CD4-positive, alpha-beta T cell (primary cell): ENCODE measurements at regions of chr14 and their contacts with region 1.

Region 1: DNA sequence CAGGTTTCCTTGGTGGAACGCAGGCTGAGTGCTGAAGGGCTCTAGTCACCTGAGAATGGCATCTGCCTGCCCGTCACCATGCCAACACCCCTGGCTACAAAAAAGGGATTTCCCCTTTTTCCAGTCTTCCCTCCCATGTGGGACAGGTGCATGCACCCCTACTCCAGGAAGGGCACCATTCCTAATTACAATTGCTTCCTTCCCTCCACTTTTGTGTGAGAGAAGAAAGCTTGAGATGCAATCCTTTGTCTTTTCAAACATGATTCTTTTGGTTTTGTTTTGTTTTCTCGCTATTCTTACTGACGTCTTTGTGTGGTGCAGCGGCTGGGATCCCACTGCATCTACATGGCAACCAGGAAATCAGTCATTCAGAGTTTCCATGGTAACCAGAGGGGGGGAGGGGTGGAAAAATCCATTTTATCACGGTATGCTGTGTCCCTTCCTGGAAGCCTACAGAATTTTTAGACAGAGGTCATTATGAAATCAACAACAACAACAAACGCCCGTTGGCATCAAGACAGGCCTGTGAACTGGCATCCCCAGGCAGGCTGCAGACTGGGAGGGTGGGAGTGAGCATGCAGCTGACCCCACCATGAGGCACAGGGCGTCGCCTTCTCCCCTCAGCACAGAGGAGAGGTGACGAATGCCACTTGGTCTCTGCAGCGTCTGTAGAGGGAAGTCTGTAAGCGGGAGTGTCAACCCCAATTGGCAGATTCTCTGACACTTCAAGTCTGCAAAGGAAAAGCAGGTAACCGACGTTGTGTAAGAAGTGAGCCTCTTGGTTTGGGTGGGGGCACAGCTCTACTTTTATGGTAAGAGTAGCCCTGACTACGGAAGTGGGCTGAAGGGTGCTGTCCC is 13.6 kb upstream of the GNG2 start:
- DNase-seq: peak; percentile 66 to 98 (median 82)
- ATAC-seq: peak; percentile 83
- H3K4me3 ChIP-seq: peak overlapping the region; percentile 53
- H3K4me3 Mint-ChIP-seq: peak overlapping the region; percentile 86
- H3K27ac ChIP-seq: peak overlapping the region; percentile 99 to 100
- H3K27ac Mint-ChIP-seq: peak overlapping the region; percentile 98
- H3K4me1 ChIP-seq: peaks cover 44% of the 10 kb centered on the region
- H3K4me1 Mint-ChIP-seq: peaks cover 72% of the 10 kb centered on the region
- H3K27me3 ChIP-seq: no peaks in the 10 kb centered on the region
- H3K27me3 Mint-ChIP-seq: no peaks in the 10 kb centered on the region
- CTCF ChIP-seq: no peak

Region 2: GRCh38 chr14:51630801-51631386 is 216.0 kb before region 1 on chr14:
- CTCF ChIA-PET with region 1: no interaction called
- POLR2A ChIA-PET with region 1: no interaction called
- intact Hi-C with region 1: no loop called
- DNase-seq: no peak
- ATAC-seq: no peak
- H3K4me3 ChIP-seq: no peak overlapping the region
- H3K4me3 Mint-ChIP-seq: no peak overlapping the region
- H3K27ac ChIP-seq: no peak overlapping the region
- H3K27ac Mint-ChIP-seq: no peak overlapping the region
- H3K4me1 ChIP-seq: no peaks in the 10 kb centered on the region
- H3K4me1 Mint-ChIP-seq: no peaks in the 10 kb centered on the region
- H3K27me3 ChIP-seq: peaks cover 3 to 16% of the 10 kb centered on the region in 2 experiments
- H3K27me3 Mint-ChIP-seq: peaks cover 27% of the 10 kb centered on the region
- CTCF ChIP-seq: no peak

Region 3: GRCh38 chr14:51828017-51828797 is 18.7 kb before region 1 on chr14:
- CTCF ChIA-PET with region 1: interaction called, 14 read pairs
- POLR2A ChIA-PET with region 1: interaction called, 16 read pairs
- intact Hi-C with region 1: loop called in 1 of 2 experiments (anchors 1 kb)
- DNase-seq: peak; percentile 15 to 82 (median 54)
- ATAC-seq: peak; percentile 96
- H3K4me3 ChIP-seq: no peak overlapping the region
- H3K4me3 Mint-ChIP-seq: no peak overlapping the region
- H3K27ac ChIP-seq: no peak overlapping the region
- H3K27ac Mint-ChIP-seq: no peak overlapping the region
- H3K4me1 ChIP-seq: peaks cover 21% of the 10 kb centered on the region
- H3K4me1 Mint-ChIP-seq: no peaks in the 10 kb centered on the region
- H3K27me3 ChIP-seq: no peaks in the 10 kb centered on the region
- H3K27me3 Mint-ChIP-seq: no peaks in the 10 kb centered on the region
- CTCF ChIP-seq: no peak

Region 4: DNA sequence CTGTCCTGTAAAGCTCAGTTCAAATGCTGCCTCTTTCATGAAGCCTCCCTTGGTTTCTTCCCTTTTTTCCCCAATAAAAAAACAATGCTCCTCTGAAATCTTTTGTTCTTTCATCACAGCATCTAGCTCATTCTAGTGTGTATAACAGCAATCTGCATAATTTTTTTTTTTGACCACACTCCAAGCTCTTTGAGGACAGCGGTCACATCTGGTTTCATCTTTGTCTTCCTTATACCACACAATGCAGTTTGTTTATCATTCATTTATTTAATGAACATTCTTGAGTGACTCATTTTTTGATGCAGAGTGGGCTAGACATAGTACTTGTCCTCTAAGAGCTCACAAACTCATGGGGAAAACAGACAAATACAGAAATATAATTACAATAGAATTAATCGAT is 20.9 kb after region 1 on chr14:
- CTCF ChIA-PET with region 1: interaction called, 33 read pairs
- POLR2A ChIA-PET with region 1: interaction called, 156 read pairs
- intact Hi-C with region 1: no loop called
- DNase-seq: peak in 3 of 14 experiments; percentile 46 to 71 (median 52)
- ATAC-seq: peak; percentile 28
- H3K4me3 ChIP-seq: peak overlapping the region; percentile 4
- H3K4me3 Mint-ChIP-seq: no peak overlapping the region
- H3K27ac ChIP-seq: no peak overlapping the region
- H3K27ac Mint-ChIP-seq: no peak overlapping the region
- H3K4me1 ChIP-seq: peaks cover 58% of the 10 kb centered on the region
- H3K4me1 Mint-ChIP-seq: peaks cover 22% of the 10 kb centered on the region
- H3K27me3 ChIP-seq: no peaks in the 10 kb centered on the region
- H3K27me3 Mint-ChIP-seq: no peaks in the 10 kb centered on the region
- CTCF ChIP-seq: no peak

Region 5: GRCh38 chr14:51908086-51908485 is 61.2 kb after region 1 on chr14:
- CTCF ChIA-PET with region 1: interaction called, 16 read pairs
- POLR2A ChIA-PET with region 1: interaction called, 7 read pairs
- intact Hi-C with region 1: loop called (anchors 1 to 10 kb)
- DNase-seq: no peak
- ATAC-seq: no peak
- H3K4me3 ChIP-seq: no peak overlapping the region
- H3K4me3 Mint-ChIP-seq: no peak overlapping the region
- H3K27ac ChIP-seq: no peak overlapping the region
- H3K27ac Mint-ChIP-seq: peak overlapping the region; percentile 20
- H3K4me1 ChIP-seq: peaks cover 45% of the 10 kb centered on the region
- H3K4me1 Mint-ChIP-seq: peaks cover 76% of the 10 kb centered on the region
- H3K27me3 ChIP-seq: no peaks in the 10 kb centered on the region
- H3K27me3 Mint-ChIP-seq: no peaks in the 10 kb centered on the region
- CTCF ChIP-seq: no peak

Region 6: DNA sequence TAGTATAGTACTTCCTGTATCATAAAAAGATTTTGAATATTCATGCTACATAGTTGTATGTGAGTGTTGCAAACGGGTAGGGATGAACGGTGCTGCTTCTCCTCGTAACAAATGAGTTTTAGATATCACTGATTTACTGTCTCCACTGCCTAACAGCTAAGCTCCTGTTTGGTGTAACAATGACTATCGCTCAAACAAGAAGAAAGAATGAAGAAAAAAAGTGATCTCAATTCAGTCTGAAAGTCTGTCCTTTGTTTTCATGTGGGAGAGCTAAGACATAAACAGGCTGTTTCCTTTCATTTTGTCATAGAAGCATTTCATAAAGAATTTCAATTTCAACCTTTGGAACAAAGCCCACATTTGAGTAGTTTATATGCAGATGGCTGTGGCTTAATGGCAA is 116.4 kb after region 1 on chr14:
- CTCF ChIA-PET with region 1: interaction called, 3 read pairs
- POLR2A ChIA-PET with region 1: interaction called, 4 read pairs
- intact Hi-C with region 1: loop called in 1 of 2 experiments (anchors 5 kb)
- DNase-seq: peak in 1 of 14 experiments; percentile 18
- ATAC-seq: peak; percentile 77
- H3K4me3 ChIP-seq: no peak overlapping the region
- H3K4me3 Mint-ChIP-seq: peak overlapping the region; percentile 80
- H3K27ac ChIP-seq: no peak overlapping the region
- H3K27ac Mint-ChIP-seq: peak overlapping the region; percentile 90
- H3K4me1 ChIP-seq: peaks cover 4% of the 10 kb centered on the region
- H3K4me1 Mint-ChIP-seq: peaks cover 60% of the 10 kb centered on the region
- H3K27me3 ChIP-seq: no peaks in the 10 kb centered on the region
- H3K27me3 Mint-ChIP-seq: no peaks in the 10 kb centered on the region
- CTCF ChIP-seq: no peak